GM12878 (cell line): ENCODE measurements at regions of chr9 and their contacts with region 1.

Region 1: GRCh38 chr9:21812946-21813568 is 10.6 kb downstream of the MTAP start:
- DNase-seq: no peak
- ATAC-seq: peak; percentile 91
- H3K4me3 ChIP-seq: no peak overlapping the region
- H3K27ac ChIP-seq: no peak overlapping the region
- H3K4me1 ChIP-seq: peaks cover 11% of the 10 kb centered on the region
- H3K27me3 ChIP-seq: no peaks in the 10 kb centered on the region
- CTCF ChIP-seq: peak; percentile 84 to 98 (median 88)
- EP300 ChIP-seq: no peak
- POLR2A ChIP-seq: no peak
- RAD21 ChIP-seq: peak; percentile 91

Region 2: DNA sequence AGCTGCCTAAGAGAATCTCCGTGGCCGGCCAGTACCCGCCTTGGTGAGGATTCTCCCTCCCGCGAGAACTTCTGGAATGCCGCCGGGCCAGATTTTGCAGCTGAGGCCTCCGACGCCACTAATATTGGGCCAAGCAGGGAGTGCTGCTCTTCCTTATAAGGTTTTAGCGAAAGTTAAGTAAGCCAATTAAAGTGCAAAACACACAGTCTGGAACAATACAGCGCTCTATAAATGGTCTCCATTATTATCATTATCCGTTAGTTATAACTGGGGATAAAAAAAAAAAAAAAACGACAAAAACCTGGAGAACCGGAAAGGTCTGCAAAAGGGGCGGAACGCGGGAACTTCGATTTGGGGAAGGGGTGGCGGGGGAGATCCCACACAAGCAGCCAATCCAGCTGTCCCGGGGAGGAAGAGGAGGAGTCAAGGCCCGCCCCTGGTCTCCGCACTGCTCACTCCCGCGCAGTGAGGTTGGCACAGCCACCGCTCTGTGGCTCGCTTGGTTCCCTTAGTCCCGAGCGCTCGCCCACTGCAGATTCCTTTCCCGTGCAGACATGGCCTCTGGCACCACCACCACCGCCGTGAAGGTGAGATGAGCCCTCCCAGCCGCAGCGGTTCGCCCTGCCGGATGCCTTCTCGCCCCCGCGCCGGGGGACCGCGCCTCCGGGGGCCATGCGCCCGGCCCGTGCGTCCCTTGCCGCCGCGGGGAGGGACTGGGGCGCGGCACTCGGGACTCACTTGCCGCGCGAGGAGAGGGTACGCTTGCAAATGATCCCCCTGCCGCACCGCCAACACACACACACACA is 10.7 kb before region 1 on chr9 and contains the start of gene MTAP:
- CTCF ChIA-PET with region 1: interaction called, 15 read pairs
- POLR2A ChIA-PET with region 1: no interaction called
- RAD21 ChIA-PET with region 1: interaction called, 4 read pairs
- SMC1A ChIA-PET with region 1: interaction called, 6 read pairs
- in situ Hi-C with region 1: no loop called
- intact Hi-C with region 1: no loop called
- DNase-seq: peak; percentile 36
- ATAC-seq: peak; percentile 93
- H3K4me3 ChIP-seq: peak within 1 kb of the TSS; percentile 84
- H3K27ac ChIP-seq: peak within 1 kb of the TSS; percentile 65
- H3K4me1 ChIP-seq: peaks cover 21% of the 10 kb centered on the region
- H3K27me3 ChIP-seq: peaks cover 0 to 10% of the 10 kb centered on the region in 2 experiments; a peak in 2 of 4 replicates
- CTCF ChIP-seq: no peak
- EP300 ChIP-seq: no peak
- POLR2A ChIP-seq: peak; percentile 90
- RAD21 ChIP-seq: no peak
- polyA plus RNA-seq, gene MTAP: 19.3 to 19.9 TPM

Region 3: DNA sequence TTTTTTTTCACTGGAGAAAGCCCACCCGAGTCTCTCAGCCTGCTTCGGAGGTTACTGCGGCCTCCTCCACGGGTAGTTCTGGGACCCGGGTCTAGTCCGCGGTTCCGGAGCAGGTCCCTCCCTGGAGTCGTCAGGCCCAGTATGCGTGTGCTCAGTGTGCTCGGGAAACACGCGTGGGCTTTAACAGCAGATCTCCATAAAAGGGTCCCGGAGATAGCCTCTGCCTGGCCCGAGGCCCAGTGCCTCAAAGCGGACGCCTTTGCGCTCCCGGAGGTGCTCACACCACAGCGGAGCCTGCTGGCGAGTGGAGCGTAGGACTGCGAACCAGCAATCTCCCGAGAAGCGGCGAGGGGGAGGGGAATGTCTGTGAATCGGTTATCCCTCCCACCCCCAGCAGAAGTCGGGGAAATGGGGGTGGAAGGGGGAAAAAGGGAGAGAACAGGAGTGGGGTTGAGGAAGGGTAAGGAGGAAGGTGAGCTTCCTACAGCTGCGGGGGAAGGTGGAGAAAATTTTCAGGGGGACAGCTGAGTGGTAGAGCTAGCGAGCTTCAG is 152.4 kb after region 1 on chr9:
- CTCF ChIA-PET with region 1: no interaction called
- POLR2A ChIA-PET with region 1: no interaction called
- RAD21 ChIA-PET with region 1: no interaction called
- SMC1A ChIA-PET with region 1: no interaction called
- in situ Hi-C with region 1: no loop called
- intact Hi-C with region 1: loop called (anchors 1 kb)
- DNase-seq: no peak
- ATAC-seq: peak; percentile 96
- H3K4me3 ChIP-seq: peak overlapping the region; percentile 57
- H3K27ac ChIP-seq: no peak overlapping the region
- H3K4me1 ChIP-seq: peaks cover 8% of the 10 kb centered on the region
- H3K27me3 ChIP-seq: peaks cover 0 to 8% of the 10 kb centered on the region in 2 experiments; a peak in 2 of 4 replicates
- CTCF ChIP-seq: peak; percentile 44 to 57 (median 47)
- EP300 ChIP-seq: no peak
- POLR2A ChIP-seq: no peak
- RAD21 ChIP-seq: peak; percentile 52

Region 4: GRCh38 chr9:22037954-22038690 is 225.1 kb after region 1 on chr9:
- CTCF ChIA-PET with region 1: interaction called, 182 read pairs
- POLR2A ChIA-PET with region 1: no interaction called
- RAD21 ChIA-PET with region 1: interaction called, 59 read pairs
- SMC1A ChIA-PET with region 1: interaction called, 56 read pairs
- in situ Hi-C with region 1: loop called (anchors 5 kb)
- intact Hi-C with region 1: loop called (anchors 1 kb)
- DNase-seq: no peak
- ATAC-seq: peak; percentile 53; the same call in 2 of the 3 replicates
- H3K4me3 ChIP-seq: no peak overlapping the region
- H3K27ac ChIP-seq: no peak overlapping the region
- H3K4me1 ChIP-seq: no peaks in the 10 kb centered on the region
- H3K27me3 ChIP-seq: no peaks in the 10 kb centered on the region; a peak in 1 of 4 replicates
- CTCF ChIP-seq: peak; percentile 30 to 48 (median 34); a peak in 4 of 6 replicates
- EP300 ChIP-seq: no peak
- POLR2A ChIP-seq: no peak
- RAD21 ChIP-seq: peak; percentile 76

Region 5: GRCh38 chr9:22238809-22239684 is 426.0 kb after region 1 on chr9:
- CTCF ChIA-PET with region 1: interaction called, 63 read pairs
- POLR2A ChIA-PET with region 1: no interaction called
- RAD21 ChIA-PET with region 1: interaction called, 19 read pairs
- SMC1A ChIA-PET with region 1: interaction called, 31 read pairs
- in situ Hi-C with region 1: loop called (anchors 5 kb)
- intact Hi-C with region 1: loop called (anchors 1 kb)
- DNase-seq: no peak
- ATAC-seq: peak; percentile 50
- H3K4me3 ChIP-seq: no peak overlapping the region
- H3K27ac ChIP-seq: no peak overlapping the region
- H3K4me1 ChIP-seq: peaks cover 19% of the 10 kb centered on the region
- H3K27me3 ChIP-seq: peaks cover 0 to 7% of the 10 kb centered on the region in 2 experiments; a peak in 2 of 4 replicates
- CTCF ChIP-seq: peak in 2 of 3 experiments; percentile 36 to 43; a peak in 4 of 6 replicates
- EP300 ChIP-seq: no peak
- POLR2A ChIP-seq: no peak
- RAD21 ChIP-seq: peak; percentile 37; the same call in 1 of the 2 replicates

Region 6: DNA sequence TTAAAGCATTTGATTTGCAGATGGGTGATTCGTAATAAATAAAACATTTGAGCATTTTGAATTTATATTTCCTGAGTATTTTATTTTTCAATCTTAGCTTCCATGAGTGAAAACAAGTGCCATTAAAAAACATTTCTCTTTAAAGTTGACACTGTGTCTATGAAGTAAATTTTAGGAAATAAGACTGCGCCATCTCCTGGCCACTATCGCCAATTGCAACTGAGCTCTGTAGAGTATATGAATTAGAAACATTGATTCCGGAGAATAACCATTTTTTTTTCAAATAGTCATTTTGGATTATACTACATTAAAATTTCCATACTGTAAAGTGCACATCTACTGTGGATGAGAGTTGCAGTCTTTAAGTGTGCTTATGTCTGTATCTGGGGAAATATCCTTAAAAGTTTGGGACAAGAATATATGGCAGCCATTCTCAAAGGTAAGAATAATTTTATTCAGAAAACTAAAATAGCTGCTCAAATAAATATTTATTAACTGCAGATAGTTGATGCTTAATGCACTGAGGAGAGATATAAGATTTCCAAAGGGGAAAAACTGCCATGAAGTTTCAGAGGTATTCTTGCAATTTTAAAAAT is 639.5 kb after region 1 on chr9:
- CTCF ChIA-PET with region 1: interaction called, 27 read pairs
- POLR2A ChIA-PET with region 1: no interaction called
- RAD21 ChIA-PET with region 1: interaction called, 7 read pairs
- SMC1A ChIA-PET with region 1: interaction called, 15 read pairs
- in situ Hi-C with region 1: loop called (anchors 5 kb)
- intact Hi-C with region 1: loop called (anchors 1 kb)
- DNase-seq: no peak
- ATAC-seq: peak; percentile 73
- H3K4me3 ChIP-seq: no peak overlapping the region
- H3K27ac ChIP-seq: no peak overlapping the region
- H3K4me1 ChIP-seq: no peaks in the 10 kb centered on the region
- H3K27me3 ChIP-seq: peaks cover 0 to 1% of the 10 kb centered on the region in 2 experiments; a peak in 1 of 4 replicates
- CTCF ChIP-seq: peak; percentile 70 to 73 (median 71)
- EP300 ChIP-seq: no peak
- POLR2A ChIP-seq: no peak
- RAD21 ChIP-seq: peak; percentile 62